ENCODE measurements at regions of chr4 and their contacts with region 1.

Region 1: GRCh38 chr4:86497980-86498862 is 95.9 kb upstream of the PTPN13 start:
- DNase-seq: peak; percentile 32
- CTCF ChIP-seq: peak; percentile 87

Region 2: DNA sequence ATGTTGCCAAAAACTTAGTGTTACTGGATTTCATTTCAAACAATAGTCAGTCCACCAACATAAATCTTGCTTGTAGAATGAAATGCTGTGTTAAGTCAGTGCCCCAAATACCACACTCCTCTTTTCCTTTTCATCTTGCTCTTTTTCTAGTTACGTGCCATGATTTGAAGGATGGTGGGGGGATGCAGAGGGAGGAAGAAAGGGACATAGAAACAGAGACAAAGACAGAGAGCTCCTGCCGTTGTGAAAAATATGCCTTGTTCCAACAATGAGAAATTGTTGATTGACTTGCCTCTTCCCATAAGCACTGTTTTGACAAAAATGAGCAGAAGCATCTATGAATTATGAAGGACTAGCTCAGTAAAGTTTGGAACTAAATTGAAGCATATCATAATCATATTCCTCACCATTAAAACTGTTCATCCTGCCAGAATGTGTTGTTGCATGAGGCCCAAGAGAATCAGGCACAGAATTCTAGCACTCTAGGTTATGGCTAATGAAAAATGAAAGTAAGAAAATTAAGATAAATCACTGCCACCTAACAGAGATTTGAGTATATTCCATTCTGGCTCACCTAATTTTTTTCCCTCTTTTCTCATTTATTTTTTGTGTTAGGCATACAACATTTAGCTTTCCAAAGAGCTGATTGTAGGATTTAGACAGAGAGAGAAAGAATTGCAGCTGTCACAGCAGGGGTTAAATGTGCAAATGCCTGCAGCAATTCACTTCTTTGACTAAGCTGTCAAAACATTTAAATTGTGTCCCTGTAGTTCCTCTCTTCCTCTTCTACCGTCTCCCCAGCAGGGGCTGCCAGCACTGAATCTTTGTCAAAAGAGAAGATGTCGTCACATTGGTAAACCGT is 15.7 kb before region 1 on chr4:
- CTCF ChIA-PET with region 1: interaction called, 112 read pairs
- POLR2A ChIA-PET with region 1: no interaction called
- DNase-seq: no peak
- CTCF ChIP-seq: no peak

Region 3: DNA sequence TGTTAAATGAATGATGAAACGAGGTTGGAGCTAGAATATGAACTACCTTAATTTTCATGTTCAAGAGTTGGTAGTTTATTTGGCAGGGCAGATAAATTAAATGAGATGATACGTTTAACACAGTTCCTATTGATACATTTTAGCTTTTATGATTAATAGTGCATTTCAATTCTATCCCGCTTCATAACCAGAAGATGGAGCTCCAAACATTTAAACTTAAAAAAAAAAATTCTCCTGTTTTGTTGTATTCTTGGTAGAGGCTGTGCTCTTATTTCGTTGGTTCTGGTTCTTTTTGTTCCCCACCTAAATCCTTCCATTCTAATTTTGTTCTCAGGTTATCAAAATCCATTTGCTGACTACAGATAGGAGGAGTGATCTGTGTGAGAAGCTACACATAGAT is 24.1 kb after region 1 on chr4:
- CTCF ChIA-PET with region 1: interaction called, 51 read pairs
- POLR2A ChIA-PET with region 1: no interaction called
- DNase-seq: no peak
- CTCF ChIP-seq: no peak

Region 4: GRCh38 chr4:86593688-86594558 is 95.7 kb after region 1 on chr4 and contains the start of gene PTPN13:
- CTCF ChIA-PET with region 1: interaction called, 45 read pairs
- POLR2A ChIA-PET with region 1: no interaction called
- DNase-seq: peak; percentile 93
- CTCF ChIP-seq: no peak

Region 5: GRCh38 chr4:86670739-86671138 is 172.5 kb after region 1 on chr4:
- CTCF ChIA-PET with region 1: no interaction called
- POLR2A ChIA-PET with region 1: no interaction called
- DNase-seq: no peak
- CTCF ChIP-seq: no peak

Region 6: GRCh38 chr4:86895692-86896488 is 397.7 kb after region 1 on chr4:
- CTCF ChIA-PET with region 1: interaction called, 131 read pairs
- POLR2A ChIA-PET with region 1: no interaction called
- DNase-seq: peak; percentile 60
- CTCF ChIP-seq: peak; percentile 60

Measured in GM10248 (cell line).